Panc1 (cell line): ENCODE measurements at regions of chr12 and their contacts with region 1.

Region 1: DNA sequence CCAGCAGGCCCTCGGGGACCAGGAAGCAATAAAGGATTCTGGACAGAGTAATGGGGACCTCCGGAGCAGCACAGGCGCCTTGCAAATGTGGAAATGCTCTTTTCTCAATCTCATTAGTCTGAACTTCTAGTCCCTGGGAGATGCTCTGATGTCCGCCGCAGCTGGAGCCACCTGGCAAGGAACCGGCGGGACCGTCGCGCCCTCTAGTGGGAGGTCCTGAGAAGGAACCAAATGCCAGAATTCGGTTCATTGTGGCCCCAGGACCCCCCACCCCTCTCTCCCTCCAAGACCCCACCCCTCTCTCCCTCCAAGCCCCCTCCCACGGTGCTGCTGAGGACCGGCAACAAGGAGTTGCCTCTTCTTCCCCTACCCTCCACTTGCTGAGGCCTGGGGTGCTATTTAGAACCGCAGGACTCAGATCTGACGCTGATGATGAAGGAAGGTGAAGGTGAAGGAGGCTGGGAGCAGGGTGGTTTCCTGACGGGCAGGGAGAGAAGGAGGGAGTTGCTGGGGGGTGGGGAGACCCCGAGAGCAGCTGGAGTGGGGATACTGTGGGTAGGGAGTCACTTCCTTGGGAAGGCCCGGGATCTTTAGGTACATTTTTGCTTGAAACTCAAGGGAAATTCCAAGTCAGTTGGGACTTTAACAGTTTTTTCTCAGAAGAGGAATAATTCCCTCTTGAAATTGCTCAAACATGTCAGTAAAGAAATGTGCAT is 42.5 kb downstream of the SMIM41 start:
- DNase-seq: no peak
- ATAC-seq: peak; percentile 67
- H3K4me3 ChIP-seq: no peak overlapping the region
- H3K27ac ChIP-seq: no peak overlapping the region
- H3K4me1 ChIP-seq: no peaks in the 10 kb centered on the region
- H3K27me3 ChIP-seq: no peaks in the 10 kb centered on the region
- CTCF ChIP-seq: peak; percentile 94

Region 2: GRCh38 chr12:52032804-52033502 is 89.0 kb before region 1 on chr12:
- CTCF ChIA-PET with region 1: interaction called, 7 read pairs
- POLR2A ChIA-PET with region 1: no interaction called
- in situ Hi-C with region 1: no loop called
- intact Hi-C with region 1: loop called (anchors 5 kb)
- DNase-seq: peak; percentile 60
- ATAC-seq: peak; percentile 99
- H3K4me3 ChIP-seq: peak overlapping the region; percentile 35 to 64
- H3K27ac ChIP-seq: peak overlapping the region; percentile 79
- H3K4me1 ChIP-seq: 0 out of 2 replicates have a peak, but pooled peaks cover 5% of the 10 kb centered on the region
- H3K27me3 ChIP-seq: 0 out of 2 replicates have a peak, but pooled peaks cover 2% of the 10 kb centered on the region
- CTCF ChIP-seq: no peak

Region 3: DNA sequence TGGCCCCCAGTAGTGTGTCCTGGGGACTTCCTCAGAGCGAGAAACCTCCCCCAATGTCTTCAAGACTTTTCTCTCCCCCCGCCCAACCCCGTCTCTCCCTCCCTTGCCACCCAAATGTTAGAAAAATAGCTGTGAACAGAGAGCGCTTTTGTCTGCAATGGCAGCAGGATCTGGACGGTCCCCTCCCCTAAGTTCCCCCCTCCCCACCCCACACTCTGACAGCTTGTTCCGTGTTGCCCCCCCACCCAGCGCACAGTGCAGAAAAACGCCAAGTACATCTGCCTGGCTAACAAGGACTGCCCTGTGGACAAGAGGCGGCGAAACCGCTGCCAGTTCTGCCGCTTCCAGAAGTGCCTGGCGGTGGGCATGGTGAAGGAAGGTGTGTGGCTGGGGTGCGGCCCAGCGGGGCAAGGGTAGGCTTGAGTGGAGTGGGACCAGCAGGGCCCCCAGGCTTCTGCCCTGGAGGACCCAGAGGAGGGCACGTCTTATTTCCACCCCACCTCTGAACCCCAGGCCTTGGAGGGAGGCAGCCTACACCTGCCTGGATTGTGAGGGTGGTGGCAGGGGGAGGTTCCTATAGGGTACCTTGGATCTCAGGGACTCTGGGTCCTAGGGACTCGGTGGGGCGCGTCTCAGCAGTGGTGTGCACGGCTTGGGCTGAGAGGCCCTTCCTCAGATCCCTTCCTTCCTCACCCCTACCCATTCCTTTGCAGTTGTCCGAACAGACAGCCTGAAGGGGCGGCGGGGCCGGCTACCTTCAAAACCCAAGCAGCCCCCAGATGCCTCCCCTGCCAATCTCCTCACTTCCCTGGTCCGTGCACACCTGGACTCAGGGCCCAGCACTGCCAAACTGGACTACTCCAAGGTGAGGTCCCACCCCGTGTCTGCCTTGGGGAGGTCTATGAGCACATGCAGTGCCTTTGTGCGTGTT is 65.9 kb before region 1 on chr12:
- CTCF ChIA-PET with region 1: interaction called, 11 read pairs
- POLR2A ChIA-PET with region 1: interaction called, 9 read pairs
- in situ Hi-C with region 1: no loop called
- intact Hi-C with region 1: no loop called
- DNase-seq: no peak
- ATAC-seq: no peak
- H3K4me3 ChIP-seq: no peak overlapping the region
- H3K27ac ChIP-seq: no peak overlapping the region
- H3K4me1 ChIP-seq: no peaks in the 10 kb centered on the region
- H3K27me3 ChIP-seq: no peaks in the 10 kb centered on the region
- CTCF ChIP-seq: no peak

Region 4: GRCh38 chr12:52175371-52176350 is 53.7 kb after region 1 on chr12:
- CTCF ChIA-PET with region 1: no interaction called
- POLR2A ChIA-PET with region 1: no interaction called
- in situ Hi-C with region 1: no loop called
- intact Hi-C with region 1: no loop called
- DNase-seq: no peak
- ATAC-seq: 0 out of 2 replicates have a peak, but pooled peaks have one; percentile 18
- H3K4me3 ChIP-seq: no peak overlapping the region
- H3K27ac ChIP-seq: peak overlapping the region; percentile 61
- H3K4me1 ChIP-seq: peaks cover 27% of the 10 kb centered on the region
- H3K27me3 ChIP-seq: no peaks in the 10 kb centered on the region
- CTCF ChIP-seq: no peak

Region 5: DNA sequence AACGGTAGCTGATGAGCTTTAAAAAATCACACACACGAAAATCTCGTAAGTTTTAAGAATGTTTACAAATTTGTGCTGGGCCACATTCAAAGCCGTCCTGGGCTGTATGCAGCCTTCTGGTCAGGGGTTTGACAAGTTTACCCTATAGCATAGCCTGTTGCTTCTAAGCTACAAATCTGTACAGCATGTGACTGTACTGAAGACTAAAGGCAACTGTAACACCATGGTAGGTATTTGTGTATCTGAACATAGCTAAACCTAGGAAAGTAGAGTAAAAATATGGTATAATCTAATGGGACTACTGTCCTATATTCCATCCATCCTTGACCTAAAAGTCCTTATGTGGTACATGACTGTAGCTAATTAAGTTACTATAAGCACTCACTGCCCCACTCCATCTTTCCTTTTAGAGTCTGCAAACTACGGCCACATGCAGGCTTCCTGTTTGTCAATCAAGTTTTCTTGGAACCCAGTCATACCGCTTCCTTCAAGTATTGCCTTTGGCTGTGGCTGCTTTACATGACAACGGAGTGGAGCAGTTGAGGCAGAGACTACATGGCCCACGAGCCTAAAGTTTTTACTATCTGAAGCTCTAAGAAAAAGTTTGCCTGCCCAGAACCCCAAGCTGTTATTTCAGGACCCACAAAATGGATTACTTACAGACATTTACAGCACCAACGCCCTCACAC is 129.5 kb after region 1 on chr12:
- CTCF ChIA-PET with region 1: interaction called, 11 read pairs
- POLR2A ChIA-PET with region 1: no interaction called
- in situ Hi-C with region 1: no loop called
- intact Hi-C with region 1: no loop called
- DNase-seq: no peak
- ATAC-seq: no peak
- H3K4me3 ChIP-seq: no peak overlapping the region
- H3K27ac ChIP-seq: peak overlapping the region; percentile 49
- H3K4me1 ChIP-seq: peaks cover 34% of the 10 kb centered on the region
- H3K27me3 ChIP-seq: no peaks in the 10 kb centered on the region
- CTCF ChIP-seq: no peak

Region 6: DNA sequence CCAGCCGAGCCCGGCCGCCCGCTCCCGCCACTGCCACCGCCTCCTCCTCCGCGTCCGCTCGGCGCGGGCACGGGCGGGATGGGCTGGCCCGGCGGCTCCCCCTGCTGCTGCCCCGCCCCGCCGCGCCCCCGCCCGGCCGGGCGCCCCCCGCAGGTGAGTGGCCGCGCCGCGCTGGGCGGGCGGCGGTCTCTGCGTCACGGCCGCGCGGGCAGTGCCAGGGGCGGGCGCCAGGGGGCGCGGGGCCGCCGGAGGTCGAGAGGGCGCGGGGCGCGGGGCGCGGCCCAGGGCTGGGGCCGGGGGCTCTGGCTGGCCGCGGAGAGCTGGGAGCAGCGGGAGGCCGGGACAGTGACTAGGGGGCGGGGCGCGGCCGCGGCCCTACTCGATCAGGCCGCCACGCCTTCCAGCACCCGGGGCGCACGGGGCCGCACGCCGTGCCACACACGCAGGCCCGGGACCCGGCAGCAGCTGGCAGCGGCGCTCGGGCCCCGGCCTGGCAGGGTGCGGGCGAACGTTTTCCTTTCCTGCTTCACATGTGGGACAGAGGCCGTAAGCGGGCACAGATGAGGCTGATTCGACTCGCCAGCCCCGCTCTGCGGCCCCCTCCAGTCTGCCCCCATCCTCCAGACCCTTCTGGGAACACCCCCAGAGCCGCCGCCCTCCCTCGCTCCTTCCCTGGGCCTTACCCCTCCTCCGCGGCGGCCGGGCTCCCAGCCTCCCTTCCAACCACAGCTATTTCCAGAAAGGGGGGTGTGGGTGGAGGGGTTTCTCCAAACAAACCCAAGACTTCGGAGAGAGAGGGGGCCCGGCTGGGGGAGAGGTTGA is 925.5 kb after region 1 on chr12:
- CTCF ChIA-PET with region 1: no interaction called
- POLR2A ChIA-PET with region 1: interaction called, 20 read pairs
- in situ Hi-C with region 1: no loop called
- intact Hi-C with region 1: no loop called
- DNase-seq: no peak
- ATAC-seq: peak; percentile 64
- H3K4me3 ChIP-seq: peak overlapping the region; percentile 48 to 71
- H3K27ac ChIP-seq: peak overlapping the region; percentile 93
- H3K4me1 ChIP-seq: peaks cover 77% of the 10 kb centered on the region
- H3K27me3 ChIP-seq: no peaks in the 10 kb centered on the region
- CTCF ChIP-seq: peak; percentile 88